B cell (primary cell): ENCODE measurements at regions of chr12 and their contacts with region 1.

Region 1: DNA sequence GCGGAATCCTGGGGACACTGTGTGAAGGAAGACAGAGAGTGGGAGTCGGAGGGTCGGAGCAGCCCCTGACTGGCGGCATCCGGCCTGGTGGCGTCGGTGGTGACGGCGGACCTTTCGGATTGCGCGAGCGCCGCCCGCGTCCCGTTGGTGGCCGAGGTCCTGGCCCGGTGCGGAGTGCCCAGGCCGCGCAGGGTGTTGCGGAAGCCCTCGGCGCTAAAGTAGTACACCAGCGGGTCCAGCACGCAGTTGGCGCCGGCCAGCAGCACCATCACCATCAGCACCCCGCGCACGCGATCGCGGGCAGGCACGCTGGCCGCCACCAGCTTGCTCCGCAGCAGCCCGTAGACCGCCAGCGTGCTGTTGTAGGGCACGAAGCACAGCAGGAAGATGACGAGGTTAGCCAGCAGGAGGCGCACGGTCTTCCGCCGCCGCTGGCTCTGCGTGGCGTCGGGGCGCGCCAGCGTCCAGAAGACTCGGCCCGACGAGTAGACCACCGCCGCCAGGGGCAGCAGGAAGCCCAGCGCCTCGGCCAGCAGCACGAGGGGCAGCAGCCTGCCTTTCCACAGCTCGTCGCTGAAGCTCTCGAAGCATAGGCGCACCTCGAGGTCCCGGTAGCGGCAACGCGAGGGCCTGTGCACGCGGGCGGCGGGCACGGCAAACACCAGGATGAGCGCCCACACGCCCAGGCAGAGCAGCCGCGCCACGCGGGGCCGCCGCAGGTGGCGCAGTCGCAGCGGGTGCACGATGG is 13.1 kb upstream of the CHD4 start:
- DNase-seq: peak; percentile 74
- ATAC-seq: peak; percentile 46
- H3K4me3 ChIP-seq: no peak overlapping the region
- H3K4me3 Mint-ChIP-seq: peak overlapping the region; percentile 45
- H3K27ac ChIP-seq: peak overlapping the region in 1 of 2 donors; percentile 28
- H3K27ac Mint-ChIP-seq: peak overlapping the region; percentile 72
- H3K4me1 ChIP-seq: peaks cover 3 to 30% of the 10 kb centered on the region in 2 donors
- H3K4me1 Mint-ChIP-seq: peaks cover 41% of the 10 kb centered on the region
- H3K27me3 ChIP-seq: no peaks in the 10 kb centered on the region
- H3K27me3 Mint-ChIP-seq: no peaks in the 10 kb centered on the region
- CTCF ChIP-seq: peak; percentile 66

Region 2: GRCh38 chr12:6582959-6583358 is 37.4 kb before region 1 on chr12:
- CTCF ChIA-PET with region 1: no interaction called
- POLR2A ChIA-PET with region 1: no interaction called
- intact Hi-C with region 1: no loop called
- DNase-seq: no peak
- ATAC-seq: no peak
- H3K4me3 ChIP-seq: no peak overlapping the region
- H3K4me3 Mint-ChIP-seq: no peak overlapping the region
- H3K27ac ChIP-seq: no peak overlapping the region
- H3K27ac Mint-ChIP-seq: no peak overlapping the region
- H3K4me1 ChIP-seq: no peaks in the 10 kb centered on the region
- H3K4me1 Mint-ChIP-seq: no peaks in the 10 kb centered on the region
- H3K27me3 ChIP-seq: no peaks in the 10 kb centered on the region
- H3K27me3 Mint-ChIP-seq: no peaks in the 10 kb centered on the region
- CTCF ChIP-seq: no peak

Region 3: GRCh38 chr12:6647083-6647604 is 26.8 kb after region 1 on chr12 and contains the start of gene ACRBP:
- CTCF ChIA-PET with region 1: interaction called, 24 read pairs
- POLR2A ChIA-PET with region 1: interaction called, 10 read pairs
- intact Hi-C with region 1: no loop called
- DNase-seq: peak; percentile 73
- ATAC-seq: peak; percentile 83
- H3K4me3 ChIP-seq: peak within 1 kb of the TSS; percentile 31 to 77 (median 60)
- H3K4me3 Mint-ChIP-seq: peak within 1 kb of the TSS; percentile 83
- H3K27ac ChIP-seq: peak within 1 kb of the TSS in 1 of 2 donors; percentile 60
- H3K27ac Mint-ChIP-seq: peak within 1 kb of the TSS; percentile 68
- H3K4me1 ChIP-seq: peaks cover 24 to 43% of the 10 kb centered on the region in 2 donors
- H3K4me1 Mint-ChIP-seq: peaks cover 40% of the 10 kb centered on the region
- H3K27me3 ChIP-seq: no peaks in the 10 kb centered on the region
- H3K27me3 Mint-ChIP-seq: no peaks in the 10 kb centered on the region
- CTCF ChIP-seq: no peak
- total RNA-seq, gene ACRBP: 11.9 and 12.3 TPM in 2 replicates

Region 4: GRCh38 chr12:6652391-6652790 is 32.1 kb after region 1 on chr12:
- CTCF ChIA-PET with region 1: interaction called, 3 read pairs
- POLR2A ChIA-PET with region 1: interaction called, 10 read pairs
- intact Hi-C with region 1: no loop called
- DNase-seq: no peak
- ATAC-seq: no peak
- H3K4me3 ChIP-seq: no peak overlapping the region
- H3K4me3 Mint-ChIP-seq: no peak overlapping the region
- H3K27ac ChIP-seq: no peak overlapping the region
- H3K27ac Mint-ChIP-seq: peak overlapping the region; percentile 47
- H3K4me1 ChIP-seq: peaks cover 0 to 6% of the 10 kb centered on the region in 2 donors
- H3K4me1 Mint-ChIP-seq: peaks cover 4% of the 10 kb centered on the region
- H3K27me3 ChIP-seq: no peaks in the 10 kb centered on the region
- H3K27me3 Mint-ChIP-seq: no peaks in the 10 kb centered on the region
- CTCF ChIP-seq: no peak